Left cardiac atrium (tissue), 4 donors: ENCODE measurements at regions of chr11 and their contacts with region 1.

Region 1: GRCh38 chr11:88523379-88524071 is 186.0 kb upstream of the CTSC start:
- DNase-seq: no peak
- ATAC-seq: no peak

Region 2: DNA sequence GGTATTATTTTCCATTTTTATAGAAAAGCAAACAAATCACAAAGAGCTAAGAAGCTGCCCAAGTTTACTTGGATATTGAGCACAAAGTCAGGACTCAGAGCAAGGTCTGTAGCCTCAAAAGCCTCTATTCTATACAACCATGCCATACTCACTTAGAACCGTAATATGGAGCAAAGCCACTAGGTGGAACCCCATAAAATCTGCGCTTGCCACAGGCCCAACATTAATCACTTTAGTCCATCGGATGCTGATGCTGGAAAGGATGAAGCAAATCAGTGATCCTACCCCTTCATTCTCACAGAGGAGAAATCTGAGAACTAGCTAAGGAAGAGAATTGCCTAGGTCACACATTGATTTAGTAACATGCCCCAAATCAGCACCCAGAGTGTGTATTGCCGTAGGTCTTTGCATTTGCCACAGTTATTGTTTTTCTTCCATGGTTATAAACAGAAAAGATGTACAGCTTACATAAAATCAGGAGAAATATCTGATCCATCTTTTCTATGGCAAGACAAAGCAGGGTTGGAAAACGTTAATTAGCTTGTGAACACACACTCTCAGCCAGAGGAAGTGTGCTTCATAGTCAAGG is 291.5 kb before region 1 on chr11:
- intact Hi-C with region 1: loop called in 1 of 2 experiments (anchors 10 kb)
- DNase-seq: no peak
- ATAC-seq: peak in 1 of 2 donors; percentile 57